ENCODE measurements at regions of chr10 and their contacts with region 1.

Region 1: GRCh38 chr10:72273410-72274212 is at the start of gene DDIT4:
- DNase-seq: peak; percentile 100
- ATAC-seq: peak; percentile 80 to 90 (median 84)
- H3K4me3 ChIP-seq: peak within 1 kb of the TSS; percentile 89
- H3K27ac ChIP-seq: peak within 1 kb of the TSS; percentile 98
- H3K4me1 ChIP-seq: peaks cover 24% of the 10 kb centered on the region
- H3K27me3 ChIP-seq: no peaks in the 10 kb centered on the region
- CTCF ChIP-seq: no peak
- total RNA-seq, gene DDIT4: 16.1 to 220 (median 65.4) TPM

Region 2: GRCh38 chr10:72229261-72230251 is 44.1 kb before region 1 on chr10:
- intact Hi-C with region 1: loop called in 1 of 2 experiments (anchors 5 kb)
- DNase-seq: no peak
- ATAC-seq: peak; percentile 78 to 83 (median 80)
- H3K4me3 ChIP-seq: no peak overlapping the region
- H3K27ac ChIP-seq: peak overlapping the region; percentile 91
- H3K4me1 ChIP-seq: peaks cover 43% of the 10 kb centered on the region
- H3K27me3 ChIP-seq: no peaks in the 10 kb centered on the region
- CTCF ChIP-seq: no peak

Region 3: DNA sequence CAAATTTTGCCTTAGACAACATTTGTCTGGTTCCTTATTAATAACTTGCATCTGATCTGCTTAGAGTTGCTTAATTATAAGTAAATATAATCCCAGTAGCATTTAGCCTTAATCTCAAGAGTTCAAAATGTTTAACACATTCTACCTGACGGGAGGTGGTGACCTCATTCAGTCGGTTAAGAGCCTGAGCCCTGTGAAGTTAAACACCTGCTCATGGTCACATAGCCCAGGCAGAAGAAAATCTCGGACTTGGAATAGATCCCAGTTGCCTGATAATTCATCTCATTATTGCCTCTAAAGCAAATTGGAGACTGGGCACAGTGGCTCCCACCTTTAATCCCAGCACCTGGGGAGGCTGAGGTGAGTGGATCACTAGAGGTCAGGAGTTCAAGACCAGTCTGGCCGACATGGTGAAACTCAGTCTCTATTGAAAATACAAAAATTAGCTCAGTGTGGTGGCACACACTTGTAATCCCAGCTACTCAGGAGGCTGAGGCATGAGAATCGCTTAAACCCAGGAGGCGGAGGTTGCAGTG is 39.0 kb before region 1 on chr10:
- intact Hi-C with region 1: loop called (anchors 5 kb)
- DNase-seq: no peak
- ATAC-seq: no peak
- H3K4me3 ChIP-seq: no peak overlapping the region
- H3K27ac ChIP-seq: peak overlapping the region; percentile 91
- H3K4me1 ChIP-seq: peaks cover 58% of the 10 kb centered on the region
- H3K27me3 ChIP-seq: no peaks in the 10 kb centered on the region
- CTCF ChIP-seq: no peak

Region 4: DNA sequence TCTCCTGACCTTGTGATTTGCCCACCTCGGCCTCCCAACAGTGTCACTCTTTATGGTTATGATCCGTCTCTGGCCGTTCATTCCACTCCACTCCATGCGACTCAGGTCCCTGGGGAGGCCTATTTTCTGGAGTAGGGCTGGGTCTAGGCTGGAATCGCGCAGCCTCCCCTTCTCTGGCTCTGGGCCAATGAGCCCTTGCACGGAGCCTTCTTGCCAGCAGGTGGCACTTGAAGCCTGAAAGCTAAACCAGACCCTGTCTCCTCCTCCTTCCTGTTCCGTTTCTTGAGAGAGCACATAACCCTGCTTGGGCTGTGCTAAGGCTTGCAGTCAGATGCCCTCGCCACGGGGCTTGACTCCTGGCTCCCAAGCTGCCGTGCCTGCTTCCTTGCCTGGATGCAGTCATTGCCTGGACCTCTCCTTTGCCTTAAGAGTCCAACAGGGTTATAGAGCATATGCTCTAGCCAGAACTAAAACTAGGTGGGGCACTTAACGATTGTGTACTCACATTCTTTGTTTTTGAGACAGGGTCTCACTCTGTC is 90.7 kb after region 1 on chr10:
- intact Hi-C with region 1: no loop called
- DNase-seq: peak; percentile 81 to 92
- ATAC-seq: peak; percentile 91 to 95 (median 92)
- H3K4me3 ChIP-seq: peak overlapping the region; percentile 27
- H3K27ac ChIP-seq: peak overlapping the region; percentile 25
- H3K4me1 ChIP-seq: peaks cover 12% of the 10 kb centered on the region
- H3K27me3 ChIP-seq: no peaks in the 10 kb centered on the region
- CTCF ChIP-seq: peak; percentile 93

Measured in psoas muscle (tissue), 8 donors.